Posterior cingulate gyrus (tissue), 11 donors: ENCODE measurements at regions of chr11 and their contacts with region 1.

Region 1: DNA sequence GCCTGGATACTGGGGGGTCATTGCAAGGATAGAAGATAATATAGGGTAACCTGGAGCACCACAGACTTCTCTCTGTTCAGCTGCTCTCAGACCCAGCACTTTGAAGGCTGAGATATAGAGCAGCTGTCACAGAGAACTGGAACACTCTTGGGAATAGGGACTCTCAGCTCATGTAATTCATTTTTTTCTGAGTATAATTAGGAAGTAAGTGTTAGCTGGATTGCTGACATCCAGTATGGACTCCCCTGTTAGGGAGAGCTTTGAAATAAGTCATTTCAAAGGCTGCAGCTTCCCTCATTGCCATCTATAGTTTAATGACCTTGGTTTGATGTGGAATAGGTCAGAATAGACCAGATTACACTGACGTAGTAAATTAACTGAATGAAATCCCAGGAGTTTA is 120.8 kb upstream of the POU2AF2 start:
- DNase-seq: no peak

Region 2: DNA sequence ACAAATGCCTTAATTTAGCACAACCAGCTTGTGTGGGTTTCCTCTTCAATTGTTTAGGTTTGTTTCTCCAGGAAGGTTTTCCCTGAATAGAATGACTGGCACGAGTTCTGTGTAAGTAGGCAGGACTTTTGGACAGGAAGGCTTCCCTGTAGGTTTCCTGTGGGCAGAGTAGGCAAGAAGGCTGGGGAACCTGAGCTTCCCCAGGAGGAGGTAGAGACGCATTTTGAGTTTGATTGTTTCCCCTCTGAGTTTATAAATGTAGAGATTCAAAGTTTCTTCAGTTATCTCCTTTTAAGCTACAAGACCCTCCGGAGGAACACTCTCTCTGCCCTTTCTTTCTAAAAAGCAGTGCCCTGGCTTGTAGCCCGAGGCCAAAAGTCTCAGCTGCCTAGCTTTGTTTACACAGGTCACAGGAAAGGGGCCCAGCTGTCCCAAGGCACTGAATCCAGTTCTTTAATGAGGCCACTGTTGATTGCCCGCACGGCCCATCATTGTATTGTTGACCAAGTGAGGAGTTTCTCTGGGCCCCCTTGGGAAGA is 761.7 kb before region 1 on chr11:
- intact Hi-C with region 1: no loop called
- DNase-seq: peak in 3 of 10 donors; percentile 26 to 82 (median 49)

Region 3: GRCh38 chr11:111077530-111078322 is 47.0 kb before region 1 on chr11:
- intact Hi-C with region 1: no loop called
- DNase-seq: no peak

Region 4: DNA sequence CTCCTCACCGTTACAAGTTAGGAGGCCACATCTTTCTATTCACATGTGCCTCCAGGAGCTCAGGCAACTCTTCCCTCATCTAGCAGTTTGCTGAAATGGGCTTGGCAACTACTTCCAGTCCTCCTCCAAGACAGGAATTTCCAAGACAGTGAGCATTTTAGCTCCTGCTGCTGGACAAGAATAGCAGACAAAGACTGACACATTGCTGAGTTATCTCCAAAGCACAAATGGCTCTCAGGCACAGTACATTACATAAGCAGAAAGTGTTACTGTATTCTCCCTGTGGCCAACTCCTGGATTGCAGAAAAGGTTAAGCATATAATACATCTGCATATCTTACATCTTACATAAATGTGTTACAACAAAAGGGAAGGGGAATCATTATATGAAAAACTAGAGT is 37.6 kb after region 1 on chr11:
- intact Hi-C with region 1: loop called (anchors 5 kb)
- DNase-seq: no peak

Region 5: DNA sequence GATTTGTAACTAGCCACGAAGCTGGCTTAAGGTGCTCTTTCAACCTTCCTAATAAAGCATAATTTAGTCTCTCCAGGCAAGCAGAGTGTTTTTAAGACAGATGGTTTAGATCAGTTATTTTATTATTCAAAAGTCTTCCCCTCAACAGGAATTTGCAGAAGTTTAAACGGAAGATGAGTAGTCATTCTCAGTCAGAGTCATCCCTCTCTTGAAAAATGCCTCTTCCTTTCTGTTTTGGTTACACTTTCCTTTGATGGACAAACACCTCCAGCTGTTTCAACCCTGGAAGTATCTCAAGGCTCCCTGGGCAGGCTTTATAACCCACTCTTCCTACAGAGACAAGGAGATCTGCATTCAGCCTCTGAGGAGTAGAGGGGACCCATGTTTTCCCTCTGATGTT is 60.5 kb after region 1 on chr11:
- intact Hi-C with region 1: no loop called
- DNase-seq: no peak

Region 6: DNA sequence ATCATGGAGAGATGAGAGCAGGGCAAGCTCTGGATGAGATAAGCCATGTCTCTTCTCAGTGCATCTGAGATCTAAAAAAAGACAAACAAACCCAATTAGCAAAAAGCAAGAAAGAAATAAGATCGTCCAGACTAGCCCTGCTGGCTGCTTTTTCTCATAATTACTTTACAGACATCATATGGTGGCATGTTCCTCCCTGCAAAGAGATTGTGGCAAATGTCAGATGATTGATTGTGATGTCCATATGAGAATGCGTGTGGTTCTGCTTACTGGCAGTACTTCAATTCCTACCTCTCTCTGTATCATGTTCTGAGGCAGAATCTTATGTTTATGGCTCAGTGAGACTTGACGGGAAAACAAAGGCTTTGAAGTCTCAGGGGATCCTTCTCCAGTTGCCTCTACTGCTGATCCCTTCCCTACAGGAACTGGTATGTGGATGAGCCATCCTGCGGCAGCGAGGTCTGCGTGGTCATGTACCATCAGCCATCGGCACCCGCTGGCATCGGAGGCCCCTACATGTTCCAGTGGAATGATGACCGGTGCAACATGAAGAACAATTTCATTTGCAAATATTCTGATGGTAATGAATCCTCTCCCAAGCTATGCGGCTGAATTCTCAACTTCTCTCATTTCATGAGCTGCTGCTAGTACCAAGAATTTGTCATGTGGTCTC is 424.6 kb after region 1 on chr11:
- intact Hi-C with region 1: no loop called
- DNase-seq: no peak